Aorta (tissue), 5 donors: ENCODE measurements at regions of chr1 and their contacts with region 1.

Region 1: GRCh38 chr1:79259388-79260336 is 253.1 kb upstream of the ADGRL4 start:
- DNase-seq: no peak
- ATAC-seq: peak; percentile 70
- H3K4me3 ChIP-seq: no peak overlapping the region
- H3K27ac ChIP-seq: no peak overlapping the region
- H3K4me1 ChIP-seq: no peaks in the 10 kb centered on the region
- H3K27me3 ChIP-seq: no peaks in the 10 kb centered on the region

Region 2: DNA sequence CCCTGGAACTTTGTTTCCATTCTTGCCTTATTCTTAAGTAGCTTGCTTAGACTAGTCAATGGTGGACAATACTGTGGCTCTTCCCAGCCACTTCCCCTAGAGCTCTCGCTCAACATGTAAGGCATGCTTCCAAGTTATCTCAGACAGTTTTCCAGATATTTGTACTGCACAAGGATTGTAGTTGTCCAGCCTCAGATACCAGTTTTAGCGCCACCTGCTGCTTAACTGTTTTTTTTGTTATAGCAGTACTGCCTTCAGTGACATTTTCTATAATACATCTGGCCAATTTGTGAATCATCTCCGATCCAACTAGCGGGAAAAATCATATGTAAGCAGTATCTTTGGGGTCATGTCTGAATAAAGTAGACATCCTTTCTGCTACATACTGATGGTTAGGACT is 93.6 kb after region 1 on chr1:
- intact Hi-C with region 1: loop called (anchors 2 to 5 kb)
- DNase-seq: peak in 1 of 2 donors; percentile 38
- ATAC-seq: peak; percentile 57
- H3K4me3 ChIP-seq: no peak overlapping the region
- H3K27ac ChIP-seq: no peak overlapping the region
- H3K4me1 ChIP-seq: no peaks in the 10 kb centered on the region
- H3K27me3 ChIP-seq: no peaks in the 10 kb centered on the region